Activated CD4-positive, alpha-beta T cell treated with anti-CD3 and anti-CD28 coated beads for 36 hours (primary cell): ENCODE measurements at regions of chr12 and their contacts with region 1.

Region 1: DNA sequence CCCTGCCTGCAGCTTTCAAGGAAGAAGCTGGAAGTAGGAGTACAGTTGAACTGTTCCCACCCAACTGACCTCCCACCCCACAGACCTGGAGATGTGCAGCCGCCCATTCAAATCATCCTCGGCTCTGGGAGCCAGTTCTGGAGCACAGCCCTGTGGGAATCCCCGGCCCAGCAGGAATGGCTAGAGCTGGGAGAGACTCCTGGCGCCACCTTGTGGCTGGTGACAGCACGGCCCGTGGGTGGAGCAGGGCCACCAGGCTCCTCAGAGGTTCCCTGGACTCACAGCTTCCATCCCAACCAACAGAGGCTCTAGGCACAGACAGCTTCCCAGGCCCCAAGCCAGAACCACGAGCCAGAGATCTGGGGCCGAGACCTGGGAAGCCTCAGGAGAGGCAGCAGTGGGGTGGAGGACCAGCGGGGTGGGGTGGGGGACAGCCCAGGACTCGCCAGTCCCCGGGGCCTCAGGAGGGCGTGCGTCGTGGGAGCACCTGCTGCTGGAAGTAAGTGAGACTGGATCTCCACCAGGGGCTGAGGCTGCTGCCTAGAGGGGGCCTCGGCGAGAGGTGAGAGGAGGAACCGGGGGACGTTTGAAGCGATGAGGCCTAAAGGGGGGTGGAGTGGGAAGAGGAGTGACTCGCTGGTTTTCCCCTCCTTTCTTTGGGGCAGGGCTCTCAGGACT is 43.4 kb downstream of the RNF34 start:
- DNase-seq: peak; percentile 85
- ATAC-seq: peak; percentile 82
- H3K4me3 Mint-ChIP-seq: no peak overlapping the region
- H3K27ac Mint-ChIP-seq: peak overlapping the region; percentile 70
- H3K4me1 Mint-ChIP-seq: peaks cover 11% of the 10 kb centered on the region
- H3K27me3 Mint-ChIP-seq: no peaks in the 10 kb centered on the region

Region 2: GRCh38 chr12:121124402-121125098 is 318.8 kb before region 1 on chr12:
- CTCF ChIA-PET with region 1: no interaction called
- POLR2A ChIA-PET with region 1: no interaction called
- intact Hi-C with region 1: no loop called
- DNase-seq: peak; percentile 57
- ATAC-seq: peak; percentile 52
- H3K4me3 Mint-ChIP-seq: no peak overlapping the region
- H3K27ac Mint-ChIP-seq: no peak overlapping the region
- H3K4me1 Mint-ChIP-seq: peaks cover 34% of the 10 kb centered on the region
- H3K27me3 Mint-ChIP-seq: no peaks in the 10 kb centered on the region

Region 3: GRCh38 chr12:121334513-121335343 is 108.6 kb before region 1 on chr12:
- CTCF ChIA-PET with region 1: interaction called, 55 read pairs
- POLR2A ChIA-PET with region 1: no interaction called
- intact Hi-C with region 1: loop called (anchors 1 kb)
- DNase-seq: no peak
- ATAC-seq: peak; percentile 83
- H3K4me3 Mint-ChIP-seq: no peak overlapping the region
- H3K27ac Mint-ChIP-seq: no peak overlapping the region
- H3K4me1 Mint-ChIP-seq: no peaks in the 10 kb centered on the region
- H3K27me3 Mint-ChIP-seq: no peaks in the 10 kb centered on the region

Region 4: GRCh38 chr12:121351820-121352681 is 91.3 kb before region 1 on chr12 and contains the start of gene ANAPC5:
- CTCF ChIA-PET with region 1: interaction called, 18 read pairs
- POLR2A ChIA-PET with region 1: no interaction called
- intact Hi-C with region 1: loop called (anchors 1 to 5 kb)
- DNase-seq: peak; percentile 94
- ATAC-seq: peak; percentile 99
- H3K4me3 Mint-ChIP-seq: peak within 1 kb of the TSS; percentile 92
- H3K27ac Mint-ChIP-seq: peak within 1 kb of the TSS; percentile 97
- H3K4me1 Mint-ChIP-seq: peaks cover 24% of the 10 kb centered on the region
- H3K27me3 Mint-ChIP-seq: peaks cover under 1% of the 10 kb centered on the region
- total RNA-seq, gene ANAPC5: 113 to 118 TPM

Region 5: GRCh38 chr12:121417847-121418246 is 25.5 kb before region 1 on chr12:
- CTCF ChIA-PET with region 1: interaction called, 16 read pairs
- POLR2A ChIA-PET with region 1: interaction called, 4 read pairs
- intact Hi-C with region 1: no loop called
- DNase-seq: no peak
- ATAC-seq: no peak
- H3K4me3 Mint-ChIP-seq: no peak overlapping the region
- H3K27ac Mint-ChIP-seq: no peak overlapping the region
- H3K4me1 Mint-ChIP-seq: peaks cover 13% of the 10 kb centered on the region
- H3K27me3 Mint-ChIP-seq: no peaks in the 10 kb centered on the region

Region 6: DNA sequence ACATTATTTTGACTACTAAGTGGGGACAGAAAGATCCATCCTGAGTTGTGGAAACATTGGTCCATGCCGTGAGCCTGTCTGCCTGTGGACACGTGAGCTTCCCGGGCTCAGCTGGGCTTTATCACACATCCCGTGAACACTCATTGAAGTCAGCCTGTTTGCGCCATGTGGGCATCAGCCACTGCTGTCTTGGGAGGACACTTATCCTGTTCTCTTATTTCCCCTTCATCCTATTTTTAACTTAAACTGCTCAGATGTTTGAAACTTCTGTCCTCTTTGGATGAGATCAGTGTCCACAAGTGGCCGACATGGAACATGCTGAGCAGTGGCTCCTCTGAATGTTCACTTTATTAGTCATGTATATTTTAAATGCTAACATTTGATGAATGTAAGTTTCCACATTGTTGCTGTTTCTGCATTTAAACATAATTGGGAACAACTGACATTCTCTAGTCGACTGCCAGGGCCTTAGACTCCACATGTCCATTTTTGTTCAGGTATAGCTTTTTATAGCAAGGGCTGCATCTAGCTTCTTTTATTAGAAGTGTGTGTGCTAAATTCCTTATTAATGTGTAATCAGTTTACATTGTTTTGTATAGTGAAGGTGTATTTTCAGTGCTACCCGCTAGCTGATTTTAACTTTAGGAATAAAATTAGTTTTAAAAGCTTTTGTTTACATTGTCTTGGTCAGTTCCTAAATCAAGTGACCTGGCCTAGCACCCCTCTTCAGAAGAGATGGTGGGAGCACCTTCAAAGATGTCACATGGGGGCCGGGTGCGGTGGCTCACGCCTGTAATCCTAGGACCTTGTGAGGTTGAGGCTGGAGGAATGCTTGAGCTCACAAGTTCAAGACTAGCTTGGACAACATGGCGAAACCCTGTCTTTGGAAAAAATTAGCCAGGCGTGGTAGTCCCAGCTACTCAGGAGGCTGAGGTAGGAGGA is 19.4 kb before region 1 on chr12:
- CTCF ChIA-PET with region 1: interaction called, 16 read pairs
- POLR2A ChIA-PET with region 1: no interaction called
- intact Hi-C with region 1: no loop called
- DNase-seq: no peak
- ATAC-seq: no peak
- H3K4me3 Mint-ChIP-seq: no peak overlapping the region
- H3K27ac Mint-ChIP-seq: no peak overlapping the region
- H3K4me1 Mint-ChIP-seq: no peaks in the 10 kb centered on the region
- H3K27me3 Mint-ChIP-seq: no peaks in the 10 kb centered on the region

Region 7: GRCh38 chr12:121461048-121461447 is 17.7 kb after region 1 on chr12:
- CTCF ChIA-PET with region 1: interaction called, 30 read pairs
- POLR2A ChIA-PET with region 1: no interaction called
- intact Hi-C with region 1: no loop called
- DNase-seq: no peak
- ATAC-seq: peak; percentile 32
- H3K4me3 Mint-ChIP-seq: no peak overlapping the region
- H3K27ac Mint-ChIP-seq: peak overlapping the region; percentile 45
- H3K4me1 Mint-ChIP-seq: peaks cover 57% of the 10 kb centered on the region
- H3K27me3 Mint-ChIP-seq: no peaks in the 10 kb centered on the region